A673 (cell line): ENCODE measurements at regions of chr2 and their contacts with region 1.

Region 1: DNA sequence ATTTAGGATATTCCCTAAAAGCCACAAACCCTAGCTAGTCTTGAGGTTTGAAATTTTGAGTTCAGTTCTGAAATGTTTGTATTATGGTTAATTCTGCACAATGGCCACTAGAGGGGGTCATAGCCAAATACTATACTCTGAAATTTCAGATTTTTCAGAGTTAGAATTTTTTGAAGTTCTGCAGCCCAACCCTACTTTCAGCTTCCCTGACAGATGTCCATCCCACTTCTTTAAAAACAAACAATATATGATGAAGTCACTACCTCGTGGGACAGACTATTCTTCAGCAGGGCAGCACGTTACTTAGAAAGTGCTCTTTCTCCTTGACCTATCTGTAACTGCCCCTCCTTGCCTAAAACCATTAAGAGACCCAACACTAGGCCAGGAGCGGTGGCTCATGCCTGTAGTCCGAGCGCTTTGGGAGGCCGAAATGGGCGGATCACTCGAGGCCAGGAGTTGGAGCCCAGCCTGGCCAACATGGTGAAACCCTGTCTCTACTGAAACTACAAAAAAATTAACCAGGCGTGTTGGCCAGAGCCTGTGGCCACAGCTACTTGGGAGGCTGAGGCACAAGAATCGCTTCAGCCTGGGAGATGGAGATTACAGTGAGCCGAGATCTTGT is 48.2 kb upstream of the PAPOLG start:
- DNase-seq: peak; percentile 63
- H3K4me3 ChIP-seq: no peak overlapping the region
- H3K27ac ChIP-seq: no peak overlapping the region
- H3K4me1 ChIP-seq: no peaks in the 10 kb centered on the region
- H3K27me3 ChIP-seq: no peaks in the 10 kb centered on the region
- CTCF ChIP-seq: peak; percentile 74

Region 2: GRCh38 chr2:60693551-60693950 is 14.3 kb before region 1 on chr2:
- CTCF ChIA-PET with region 1: interaction called, 12 read pairs
- POLR2A ChIA-PET with region 1: no interaction called
- intact Hi-C with region 1: no loop called
- DNase-seq: no peak
- H3K4me3 ChIP-seq: no peak overlapping the region
- H3K27ac ChIP-seq: no peak overlapping the region
- H3K4me1 ChIP-seq: no peaks in the 10 kb centered on the region
- H3K27me3 ChIP-seq: peaks cover 4% of the 10 kb centered on the region
- CTCF ChIP-seq: no peak

Region 3: DNA sequence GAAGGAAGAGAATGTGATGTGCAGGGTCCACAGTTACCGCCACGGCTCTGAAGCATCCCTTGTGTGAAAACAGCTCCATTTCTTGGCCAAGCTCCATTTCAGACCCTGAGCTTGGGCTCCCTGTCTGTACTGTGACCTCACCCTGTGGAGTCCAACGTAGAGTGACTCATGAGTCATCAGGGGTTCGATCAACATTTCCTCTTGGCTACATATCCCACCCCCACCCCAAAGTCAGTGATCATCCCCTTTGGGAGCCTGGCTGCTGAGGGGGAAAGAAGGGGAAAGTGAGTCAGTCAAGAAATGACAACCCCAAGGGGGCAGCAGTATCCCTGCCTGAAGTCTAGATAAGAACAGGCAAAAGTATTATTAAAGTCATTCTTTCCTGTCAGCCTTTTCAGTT is 110.4 kb after region 1 on chr2:
- CTCF ChIA-PET with region 1: no interaction called
- POLR2A ChIA-PET with region 1: no interaction called
- intact Hi-C with region 1: no loop called
- DNase-seq: no peak
- H3K4me3 ChIP-seq: no peak overlapping the region
- H3K27ac ChIP-seq: no peak overlapping the region
- H3K4me1 ChIP-seq: no peaks in the 10 kb centered on the region
- H3K27me3 ChIP-seq: no peaks in the 10 kb centered on the region
- CTCF ChIP-seq: peak; percentile 46

Region 4: DNA sequence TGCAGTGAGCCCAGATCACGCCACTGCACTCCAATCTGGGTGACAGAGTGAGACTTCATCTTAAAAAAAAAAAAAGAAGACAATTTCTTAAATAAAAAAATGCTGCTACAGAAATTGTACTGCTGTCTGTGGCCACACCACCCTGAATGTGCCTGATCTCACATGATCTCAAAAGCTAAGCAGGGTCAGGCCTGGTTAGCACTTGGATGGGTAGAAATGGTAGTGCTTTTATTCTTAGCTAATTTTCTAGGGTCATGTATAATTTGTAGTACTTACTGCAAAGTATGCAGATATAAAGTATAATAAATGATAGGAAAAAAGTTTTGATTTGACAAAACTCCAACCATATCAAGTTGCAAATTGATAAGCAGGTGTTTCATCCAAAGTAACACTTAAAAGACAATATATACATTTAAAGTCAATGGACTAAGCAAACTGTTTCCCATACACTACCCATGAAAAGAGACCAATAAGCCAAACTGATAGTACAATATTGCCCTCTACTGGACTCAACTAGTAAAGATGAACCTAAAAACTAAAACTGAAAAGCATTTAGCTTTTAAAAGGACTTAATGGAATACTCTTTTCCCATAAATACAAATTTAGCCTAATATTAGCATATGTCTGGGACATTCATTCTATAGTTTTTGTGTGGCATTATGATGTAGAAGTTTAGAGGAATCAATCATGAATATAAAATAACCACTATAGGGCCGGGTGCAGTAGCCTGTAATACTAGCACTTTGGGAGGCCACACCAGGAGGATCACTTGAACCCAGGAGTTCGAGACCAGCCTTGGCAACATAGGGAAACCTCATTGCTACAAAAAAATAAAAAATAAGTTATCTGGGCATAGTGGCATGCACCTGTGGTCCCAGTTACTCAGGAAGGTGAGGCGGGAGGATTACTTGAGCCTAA is 291.0 kb after region 1 on chr2:
- CTCF ChIA-PET with region 1: interaction called, 9 read pairs
- POLR2A ChIA-PET with region 1: no interaction called
- intact Hi-C with region 1: loop called (anchors 1 kb)
- DNase-seq: peak; percentile 69
- H3K4me3 ChIP-seq: no peak overlapping the region
- H3K27ac ChIP-seq: no peak overlapping the region
- H3K4me1 ChIP-seq: no peaks in the 10 kb centered on the region
- H3K27me3 ChIP-seq: no peaks in the 10 kb centered on the region
- CTCF ChIP-seq: peak; percentile 73

Region 5: DNA sequence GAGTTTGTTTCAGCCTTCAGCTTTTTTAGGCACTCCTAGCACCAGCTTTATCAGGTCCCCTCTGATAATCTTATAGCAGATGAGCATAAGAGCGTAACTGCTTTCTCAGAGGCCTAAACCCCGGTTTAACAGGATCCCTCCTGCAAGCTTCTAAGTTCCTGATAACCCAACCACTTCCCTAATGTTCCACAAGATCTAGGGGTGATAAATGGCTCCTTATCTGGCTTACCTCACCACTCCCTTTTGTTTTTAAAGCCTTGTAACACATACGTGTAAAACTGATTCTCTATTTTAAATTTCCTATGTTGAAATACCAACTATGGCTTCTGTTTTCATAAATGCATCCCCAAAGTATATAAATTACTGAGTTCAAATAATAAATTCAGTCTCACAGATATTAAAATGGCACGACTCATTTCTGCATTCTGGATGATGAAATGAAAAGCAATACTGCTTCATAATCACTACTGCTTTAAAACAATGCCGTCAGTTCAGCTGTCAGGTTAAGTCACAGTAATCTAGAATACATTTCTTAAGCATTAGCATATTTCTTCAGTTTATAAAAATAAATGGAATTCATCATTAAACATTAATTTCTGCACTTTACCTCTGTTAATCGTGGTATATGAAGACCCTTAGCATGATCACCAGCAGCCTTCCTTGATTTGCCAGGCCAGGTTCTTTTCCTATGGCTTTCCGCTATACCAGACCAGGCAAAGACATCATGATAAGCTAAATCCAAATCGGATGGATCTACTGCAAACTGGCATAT is 580.4 kb after region 1 on chr2:
- CTCF ChIA-PET with region 1: no interaction called
- POLR2A ChIA-PET with region 1: no interaction called
- intact Hi-C with region 1: no loop called
- DNase-seq: peak; percentile 7
- H3K4me3 ChIP-seq: no peak overlapping the region
- H3K27ac ChIP-seq: peak overlapping the region; percentile 58
- H3K4me1 ChIP-seq: peaks cover 17% of the 10 kb centered on the region
- H3K27me3 ChIP-seq: no peaks in the 10 kb centered on the region
- CTCF ChIP-seq: no peak